Tibial artery (tissue), 4 donors: ENCODE measurements at regions of chr5 and their contacts with region 1.

Region 1: DNA sequence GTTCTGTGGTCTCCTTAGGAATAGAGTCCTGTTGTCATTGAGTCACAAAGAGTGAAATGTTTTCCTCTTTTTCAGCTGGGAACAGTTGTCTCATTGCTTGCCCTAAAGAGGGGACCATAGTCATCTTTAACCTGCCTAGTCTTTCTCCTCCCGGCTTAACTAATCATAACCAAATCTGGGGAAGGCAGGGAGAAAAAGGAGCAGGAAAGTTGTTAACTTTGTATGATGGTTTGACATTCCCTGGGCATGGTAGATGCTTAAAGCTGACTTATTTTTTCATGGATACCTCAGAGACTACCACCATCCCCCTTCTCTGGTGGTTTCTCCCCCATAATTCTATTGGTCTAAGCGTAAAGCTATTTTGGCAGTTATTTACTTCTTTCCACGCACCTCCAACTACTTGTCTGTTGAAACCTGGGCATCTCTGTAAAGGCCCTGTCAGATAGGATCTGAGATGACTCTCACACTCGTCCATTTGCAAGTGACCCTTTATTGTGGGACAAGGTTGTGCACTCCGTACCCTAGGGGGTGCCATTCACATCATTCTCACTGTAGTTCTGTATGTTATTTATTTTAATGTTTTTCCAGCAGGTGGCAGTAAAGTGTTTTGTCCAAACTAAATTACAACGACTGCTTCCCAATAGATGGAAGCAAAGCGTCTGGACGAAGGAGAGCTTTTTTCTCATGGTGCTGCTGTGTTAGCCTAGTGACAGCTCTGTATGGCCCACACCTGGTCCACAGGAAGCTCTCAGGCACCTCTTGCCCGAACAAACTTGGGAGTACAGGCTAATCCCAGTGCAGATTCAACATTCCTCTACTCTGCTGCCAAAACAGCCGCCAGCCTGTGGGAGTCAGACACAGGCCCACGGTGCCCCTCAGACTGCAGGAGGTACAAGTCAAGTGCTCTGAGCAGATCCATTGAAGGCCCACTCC is 3.0 kb upstream of the FAM13B start:
- DNase-seq: peak; percentile 54 to 73
- H3K4me3 ChIP-seq: no peak overlapping the region
- H3K27ac ChIP-seq: peak overlapping the region; percentile 55 to 60
- H3K4me1 ChIP-seq: peaks cover 0 to 34% (median 15%) of the 10 kb centered on the region in 4 donors
- H3K27me3 ChIP-seq: no peaks in the 10 kb centered on the region
- CTCF ChIP-seq: peak; percentile 73 to 82

Region 2: DNA sequence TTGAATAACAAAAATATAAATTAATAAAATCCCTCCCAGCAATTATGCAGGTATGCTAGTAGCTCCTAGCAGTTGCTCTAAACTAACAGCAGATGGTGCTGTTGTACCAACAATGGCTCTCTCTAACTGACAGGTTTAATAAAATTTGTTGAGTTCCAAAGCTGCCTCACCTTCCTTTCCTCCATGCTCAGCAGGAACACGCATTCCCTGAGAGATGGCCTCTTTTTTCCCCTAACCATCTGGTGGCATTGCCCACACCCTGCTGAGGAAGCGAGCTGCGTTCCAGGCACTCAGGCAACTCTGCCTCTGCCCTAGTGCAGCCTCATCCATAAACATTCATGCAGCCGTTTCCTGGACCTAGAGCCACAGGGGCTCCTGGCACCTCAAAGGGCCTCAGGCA is 406.2 kb before region 1 on chr5:
- intact Hi-C with region 1: loop called (anchors 10 kb)
- DNase-seq: no peak
- H3K4me3 ChIP-seq: peak overlapping the region in 1 of 2 donors; percentile 9
- H3K27ac ChIP-seq: peak overlapping the region; percentile 76 to 80
- H3K4me1 ChIP-seq: peaks cover 0 to 23% (median 14%) of the 10 kb centered on the region in 4 donors
- H3K27me3 ChIP-seq: no peaks in the 10 kb centered on the region
- CTCF ChIP-seq: peak; percentile 92 to 94

Region 3: DNA sequence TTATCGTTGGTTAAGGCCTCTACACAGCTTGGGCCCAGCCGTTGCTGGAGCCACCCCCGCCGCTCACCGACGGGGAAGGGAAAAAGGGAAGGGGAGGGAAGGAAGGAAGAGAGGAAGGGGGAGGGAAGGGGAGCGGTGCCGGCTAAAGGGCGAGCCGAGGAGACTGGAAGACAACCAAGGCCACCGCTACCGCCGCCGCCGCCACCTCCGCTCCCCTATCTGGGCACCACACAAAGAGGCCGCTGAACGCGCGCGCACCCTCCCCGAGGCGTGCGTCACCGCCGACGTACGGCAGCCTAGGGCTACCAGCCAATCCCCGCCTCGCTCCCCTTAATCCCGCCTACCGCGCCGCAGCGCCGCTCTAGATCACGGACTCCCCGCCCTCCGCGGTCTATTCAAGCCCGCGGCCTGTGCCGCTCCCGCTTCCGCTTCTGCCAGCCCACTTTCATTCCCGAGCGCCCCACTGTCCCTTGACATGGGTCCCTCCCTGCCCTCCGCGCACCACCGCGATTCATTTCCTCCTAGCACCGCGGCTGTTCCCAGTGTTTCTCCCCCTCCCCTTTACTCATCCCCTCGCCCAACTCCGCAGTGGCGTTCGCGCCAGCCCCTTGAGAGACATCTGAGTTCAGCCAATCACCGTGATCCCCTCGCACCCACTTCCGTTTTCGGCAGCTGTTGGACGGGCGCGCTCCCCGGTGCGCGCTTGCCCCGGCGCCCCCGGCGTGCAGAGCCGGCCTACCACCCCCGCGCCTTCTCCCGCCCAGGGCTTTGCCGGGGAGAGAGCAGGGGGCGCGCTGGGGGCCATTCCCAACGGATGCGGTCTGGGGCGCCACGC is 281.5 kb before region 1 on chr5 and contains the start of gene HNRNPA0:
- intact Hi-C with region 1: loop called (anchors 10 kb)
- DNase-seq: peak; percentile 95 to 97
- H3K4me3 ChIP-seq: peak within 1 kb of the TSS; percentile 68 to 86
- H3K27ac ChIP-seq: peak within 1 kb of the TSS; percentile 96 to 99
- H3K4me1 ChIP-seq: peaks cover 0 to 31% (median 16%) of the 10 kb centered on the region in 4 donors
- H3K27me3 ChIP-seq: no peaks in the 10 kb centered on the region
- CTCF ChIP-seq: peak in 1 of 2 experiments; percentile 21

Region 4: GRCh38 chr5:138065102-138065501 is 29.2 kb after region 1 on chr5:
- intact Hi-C with region 1: loop called (anchors 5 kb)
- DNase-seq: no peak
- H3K4me3 ChIP-seq: no peak overlapping the region
- H3K27ac ChIP-seq: no peak overlapping the region
- H3K4me1 ChIP-seq: no peaks in the 10 kb centered on the region
- H3K27me3 ChIP-seq: no peaks in the 10 kb centered on the region
- CTCF ChIP-seq: no peak